AG04450 (cell line): ENCODE measurements at regions of chr1 and their contacts with region 1.

Region 1: DNA sequence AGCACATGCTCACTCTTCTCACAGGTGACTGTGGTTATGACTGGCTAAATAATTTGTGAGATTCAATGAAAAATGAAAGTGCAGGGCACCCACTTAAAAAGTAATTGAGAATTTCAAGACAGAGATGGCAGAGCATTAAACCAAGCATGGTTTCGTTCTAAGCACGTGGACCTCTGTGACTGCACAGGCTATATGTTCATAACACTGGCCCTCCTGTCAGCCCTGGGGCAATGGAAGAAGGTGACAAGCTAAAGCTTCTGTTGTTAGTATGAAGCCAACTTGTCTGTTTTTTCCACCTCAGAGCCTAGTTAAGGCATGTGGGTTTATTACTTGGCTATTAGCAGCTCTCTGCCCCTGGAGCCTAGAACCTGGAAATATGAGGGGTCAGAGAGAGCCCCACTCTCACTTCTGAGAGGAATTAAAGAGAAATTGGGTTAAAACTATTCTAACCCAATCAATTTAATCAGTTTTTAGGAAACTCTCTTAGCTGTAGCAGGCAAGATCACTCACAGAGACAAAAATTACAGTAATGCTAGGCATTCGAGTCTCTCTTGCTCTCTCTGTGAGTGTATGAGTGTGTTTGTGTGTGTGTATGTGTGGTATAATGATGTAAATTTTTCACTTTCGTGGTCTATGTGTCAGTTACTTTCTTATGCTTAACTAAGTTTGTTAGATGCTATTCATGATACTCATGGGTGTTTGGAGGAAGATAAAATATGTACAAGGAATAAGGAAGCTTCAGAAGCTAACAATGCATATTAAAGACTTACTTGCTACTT is 131.2 kb downstream of the FASLG start:
- DNase-seq: no peak
- H3K4me3 ChIP-seq: no peak overlapping the region
- H3K27ac ChIP-seq: no peak overlapping the region
- H3K27me3 ChIP-seq: no peaks in the 10 kb centered on the region
- CTCF ChIP-seq: no peak

Region 2: GRCh38 chr1:172449585-172450534 is 340.2 kb before region 1 on chr1:
- CTCF ChIA-PET with region 1: no interaction called
- POLR2A ChIA-PET with region 1: interaction called, 14 read pairs
- DNase-seq: peak; percentile 4
- H3K4me3 ChIP-seq: no peak overlapping the region
- H3K27ac ChIP-seq: no peak overlapping the region
- H3K27me3 ChIP-seq: peaks cover 4% of the 10 kb centered on the region
- CTCF ChIP-seq: peak; percentile 92

Region 3: DNA sequence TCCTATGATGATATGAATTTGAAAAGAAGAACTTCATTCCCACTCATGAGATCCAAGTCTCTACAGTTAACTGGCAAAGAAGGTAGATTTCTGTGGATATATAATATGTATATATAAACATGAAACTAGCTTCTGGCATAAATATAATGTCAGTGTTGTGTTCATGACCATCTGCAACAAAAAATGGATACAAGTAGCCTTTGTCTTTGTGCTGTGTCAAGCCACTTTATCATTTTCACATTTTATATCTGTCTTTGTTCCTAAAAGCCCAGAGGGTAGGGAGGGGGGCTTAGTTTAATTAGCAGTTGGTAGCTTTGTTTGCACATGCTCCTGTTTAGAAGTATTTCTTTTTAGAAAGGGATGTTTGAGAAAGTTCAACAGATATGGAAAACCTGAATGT is 187.3 kb before region 1 on chr1:
- CTCF ChIA-PET with region 1: no interaction called
- POLR2A ChIA-PET with region 1: no interaction called
- DNase-seq: no peak
- H3K4me3 ChIP-seq: no peak overlapping the region
- H3K27ac ChIP-seq: no peak overlapping the region
- H3K27me3 ChIP-seq: no peaks in the 10 kb centered on the region
- CTCF ChIP-seq: no peak

Region 4: GRCh38 chr1:172809750-172810149 is 19.7 kb after region 1 on chr1:
- CTCF ChIA-PET with region 1: no interaction called
- POLR2A ChIA-PET with region 1: no interaction called
- DNase-seq: no peak
- H3K4me3 ChIP-seq: no peak overlapping the region
- H3K27ac ChIP-seq: no peak overlapping the region
- H3K27me3 ChIP-seq: no peaks in the 10 kb centered on the region
- CTCF ChIP-seq: no peak

Region 5: DNA sequence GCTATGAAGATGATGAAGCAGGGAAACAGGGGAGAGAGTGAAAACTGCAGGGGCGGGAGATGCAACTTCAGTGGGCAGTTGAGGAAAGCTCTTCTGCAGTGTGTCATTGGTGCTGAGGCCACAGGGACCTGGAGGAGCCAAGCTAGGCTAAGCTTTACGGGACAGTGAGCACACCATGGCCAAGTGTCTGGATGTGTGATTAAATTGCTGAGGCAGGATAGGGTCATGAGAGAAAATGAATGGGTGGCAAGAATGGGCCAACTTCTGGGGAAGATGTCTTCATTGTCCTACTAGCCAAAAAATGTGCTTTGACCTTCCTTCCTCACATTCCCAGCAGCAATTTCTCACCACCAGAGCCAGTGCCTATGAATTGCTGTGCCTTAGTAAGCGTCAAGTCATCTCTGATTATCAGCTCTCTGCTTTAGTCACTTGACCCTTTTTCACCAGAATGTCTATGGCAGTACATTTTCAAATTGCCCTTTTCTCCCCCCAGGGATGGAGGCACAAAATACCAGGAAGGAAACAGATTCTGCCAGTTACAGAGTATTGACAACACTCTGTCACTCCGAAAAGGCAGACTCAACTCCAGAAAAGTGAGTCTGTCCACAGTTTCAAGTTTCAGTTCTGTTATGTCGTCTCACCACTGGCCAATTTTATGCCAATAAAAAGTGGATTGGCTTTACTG is 93.2 kb after region 1 on chr1:
- CTCF ChIA-PET with region 1: no interaction called
- POLR2A ChIA-PET with region 1: no interaction called
- DNase-seq: no peak
- H3K4me3 ChIP-seq: no peak overlapping the region
- H3K27ac ChIP-seq: no peak overlapping the region
- H3K27me3 ChIP-seq: no peaks in the 10 kb centered on the region
- CTCF ChIP-seq: no peak